GM12878 (cell line): ENCODE measurements at regions of chr9 and their contacts with region 1.

Region 1: DNA sequence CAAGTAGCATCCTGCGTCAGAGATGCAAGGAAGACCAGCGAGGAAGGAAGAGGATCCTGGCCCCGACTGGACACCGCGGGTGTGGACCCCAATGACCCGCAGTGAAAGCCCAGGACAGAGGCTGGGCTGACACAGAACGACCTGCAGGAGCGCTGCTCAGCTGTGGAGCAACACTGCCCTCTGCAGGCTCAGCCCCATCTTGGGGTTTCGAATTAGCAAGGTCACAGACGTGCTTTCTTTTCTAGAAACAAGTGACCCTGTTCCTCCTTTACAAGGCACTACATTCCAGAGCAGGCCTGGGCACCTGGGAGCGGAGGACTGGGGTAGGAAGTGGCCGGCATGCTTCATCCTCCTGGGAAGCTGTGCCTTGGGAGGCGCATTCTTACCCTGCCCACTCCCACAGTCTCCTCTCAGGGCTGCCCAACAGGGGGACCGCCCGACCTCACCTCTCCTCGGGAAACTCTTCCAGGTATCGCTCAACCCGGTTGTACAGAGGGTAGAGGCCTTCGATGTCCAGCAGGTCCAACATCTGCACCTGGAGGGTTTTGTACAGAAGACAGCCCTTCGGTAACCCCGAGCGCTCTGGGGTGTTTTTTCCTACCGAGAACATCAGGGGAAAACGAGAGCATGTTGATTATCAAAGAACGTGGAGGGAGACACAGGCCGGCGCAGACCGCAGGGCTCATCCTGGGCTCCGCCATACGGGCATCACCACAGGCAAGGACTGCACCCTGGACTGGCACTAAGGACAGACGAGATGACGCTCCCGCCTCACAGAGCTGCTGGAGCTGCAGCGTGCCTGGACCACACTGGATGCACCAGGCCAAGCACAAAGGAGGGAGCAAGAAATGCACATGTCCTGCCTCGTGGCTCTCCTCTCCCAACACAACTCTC is 35.0 kb downstream of the IPPK start:
- DNase-seq: peak; percentile 15
- ATAC-seq: peak; percentile 98
- H3K4me3 ChIP-seq: no peak overlapping the region
- H3K27ac ChIP-seq: no peak overlapping the region
- H3K4me1 ChIP-seq: peaks cover 4% of the 10 kb centered on the region
- H3K27me3 ChIP-seq: no peaks in the 10 kb centered on the region
- CTCF ChIP-seq: peak; percentile 93 to 96 (median 95)
- EP300 ChIP-seq: no peak
- POLR2A ChIP-seq: no peak
- RAD21 ChIP-seq: peak; percentile 87

Region 2: DNA sequence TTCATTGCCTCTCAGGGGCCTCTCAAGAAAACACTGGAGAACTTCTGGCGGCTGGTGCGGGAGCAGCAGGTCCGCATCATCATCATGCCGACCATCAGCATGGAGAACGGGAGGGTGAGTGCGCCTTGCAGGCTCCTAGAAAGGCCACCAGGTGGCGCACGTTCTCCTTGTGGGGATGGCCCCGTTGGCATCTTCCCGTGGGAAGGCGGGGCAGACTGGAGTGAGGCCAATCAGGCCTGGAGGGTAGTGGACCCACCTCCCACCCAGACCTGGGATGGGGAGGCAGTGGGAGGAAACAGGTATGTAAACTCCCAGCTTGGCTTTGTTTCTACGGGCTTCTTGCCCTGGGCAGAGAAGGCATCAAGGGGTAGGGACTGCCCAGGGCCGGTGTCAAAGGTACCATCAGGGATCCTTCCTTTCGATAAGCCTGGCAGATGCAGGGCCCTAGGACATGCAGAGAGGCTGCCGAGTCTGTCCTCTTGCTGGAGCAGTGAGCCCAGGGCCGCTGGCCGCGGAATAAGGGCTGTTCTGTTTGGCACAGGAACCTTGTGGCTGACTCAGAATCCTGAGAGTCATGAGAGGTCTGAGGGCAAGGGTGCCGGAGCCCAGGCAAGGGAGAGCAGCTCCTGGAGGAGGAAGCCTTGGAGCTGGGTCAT is 500.9 kb before region 1 on chr9:
- CTCF ChIA-PET with region 1: interaction called, 44 read pairs
- POLR2A ChIA-PET with region 1: interaction called, 3 read pairs
- RAD21 ChIA-PET with region 1: interaction called, 10 read pairs
- SMC1A ChIA-PET with region 1: interaction called, 18 read pairs
- in situ Hi-C with region 1: loop called (anchors 5 kb)
- intact Hi-C with region 1: loop called (anchors 2 kb)
- DNase-seq: no peak
- ATAC-seq: peak; percentile 90
- H3K4me3 ChIP-seq: no peak overlapping the region
- H3K27ac ChIP-seq: no peak overlapping the region
- H3K4me1 ChIP-seq: no peaks in the 10 kb centered on the region
- H3K27me3 ChIP-seq: no peaks in the 10 kb centered on the region
- CTCF ChIP-seq: peak; percentile 87 to 97 (median 95)
- EP300 ChIP-seq: no peak
- POLR2A ChIP-seq: no peak
- RAD21 ChIP-seq: peak; percentile 69

Region 3: GRCh38 chr9:92325269-92325990 is 309.5 kb before region 1 on chr9 and contains the starts of genes CENPP and NOL8:
- CTCF ChIA-PET with region 1: interaction called, 9 read pairs
- POLR2A ChIA-PET with region 1: no interaction called
- RAD21 ChIA-PET with region 1: interaction called, 9 read pairs
- SMC1A ChIA-PET with region 1: interaction called, 9 read pairs
- in situ Hi-C with region 1: loop called (anchors 5 kb)
- intact Hi-C with region 1: loop called (anchors 5 kb)
- DNase-seq: peak; percentile 80
- ATAC-seq: peak; percentile 95
- H3K4me3 ChIP-seq: peak within 1 kb of the TSS; percentile 96
- H3K27ac ChIP-seq: peak within 1 kb of the TSS; percentile 98
- H3K4me1 ChIP-seq: peaks cover 2% of the 10 kb centered on the region; the same call in 1 of the 2 replicates
- H3K27me3 ChIP-seq: no peaks in the 10 kb centered on the region
- CTCF ChIP-seq: no peak
- EP300 ChIP-seq: no peak; a peak in 1 of 4 replicates
- POLR2A ChIP-seq: peak; percentile 88
- RAD21 ChIP-seq: no peak
- polyA plus RNA-seq, gene CENPP: 9.4 to 11.7 TPM
- polyA plus RNA-seq, gene NOL8: 55.9 to 58.6 TPM

Region 4: GRCh38 chr9:92501671-92502393 is 133.1 kb before region 1 on chr9:
- CTCF ChIA-PET with region 1: interaction called, 4 read pairs
- POLR2A ChIA-PET with region 1: no interaction called
- RAD21 ChIA-PET with region 1: no interaction called
- SMC1A ChIA-PET with region 1: no interaction called
- in situ Hi-C with region 1: no loop called
- intact Hi-C with region 1: loop called (anchors 10 kb)
- DNase-seq: no peak
- ATAC-seq: peak; percentile 96
- H3K4me3 ChIP-seq: no peak overlapping the region
- H3K27ac ChIP-seq: no peak overlapping the region
- H3K4me1 ChIP-seq: no peaks in the 10 kb centered on the region
- H3K27me3 ChIP-seq: no peaks in the 10 kb centered on the region
- CTCF ChIP-seq: peak; percentile 43 to 71 (median 70)
- EP300 ChIP-seq: no peak
- POLR2A ChIP-seq: no peak
- RAD21 ChIP-seq: peak; percentile 49

Region 5: GRCh38 chr9:92525306-92525705 is 109.7 kb before region 1 on chr9:
- CTCF ChIA-PET with region 1: no interaction called
- POLR2A ChIA-PET with region 1: no interaction called
- RAD21 ChIA-PET with region 1: no interaction called
- SMC1A ChIA-PET with region 1: no interaction called
- in situ Hi-C with region 1: no loop called
- intact Hi-C with region 1: no loop called
- DNase-seq: no peak
- ATAC-seq: no peak
- H3K4me3 ChIP-seq: no peak overlapping the region
- H3K27ac ChIP-seq: no peak overlapping the region
- H3K4me1 ChIP-seq: no peaks in the 10 kb centered on the region
- H3K27me3 ChIP-seq: no peaks in the 10 kb centered on the region
- CTCF ChIP-seq: no peak
- EP300 ChIP-seq: no peak
- POLR2A ChIP-seq: no peak
- RAD21 ChIP-seq: no peak

Region 6: DNA sequence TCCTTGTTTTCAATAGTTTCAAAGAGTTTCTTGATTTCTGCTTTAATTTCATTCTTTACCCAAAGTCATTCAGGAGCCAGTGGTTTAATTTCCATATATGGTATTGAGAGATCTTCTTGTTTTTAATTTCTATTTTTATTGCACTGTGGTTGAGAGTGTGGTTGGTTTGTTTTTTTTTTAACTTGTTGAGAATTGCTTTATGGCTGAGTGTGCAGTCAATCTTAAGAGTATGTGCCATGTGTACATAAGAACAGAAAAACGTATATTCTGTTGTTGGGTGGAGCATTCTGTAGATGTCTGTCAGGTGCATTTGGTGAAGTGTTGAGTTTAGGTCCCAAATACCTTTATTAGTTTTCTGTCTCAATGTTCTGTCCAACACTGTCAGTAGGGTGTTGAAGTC is 61.7 kb after region 1 on chr9:
- CTCF ChIA-PET with region 1: no interaction called
- POLR2A ChIA-PET with region 1: no interaction called
- RAD21 ChIA-PET with region 1: no interaction called
- SMC1A ChIA-PET with region 1: no interaction called
- in situ Hi-C with region 1: no loop called
- intact Hi-C with region 1: no loop called
- DNase-seq: no peak
- ATAC-seq: peak; percentile 67
- H3K4me3 ChIP-seq: no peak overlapping the region
- H3K27ac ChIP-seq: peak overlapping the region; percentile 66
- H3K4me1 ChIP-seq: no peaks in the 10 kb centered on the region; the same call in 1 of the 2 replicates
- H3K27me3 ChIP-seq: no peaks in the 10 kb centered on the region
- CTCF ChIP-seq: no peak
- EP300 ChIP-seq: no peak
- POLR2A ChIP-seq: no peak
- RAD21 ChIP-seq: no peak